ENCODE measurements at regions of chr12 and their contacts with region 1.

Region 1: DNA sequence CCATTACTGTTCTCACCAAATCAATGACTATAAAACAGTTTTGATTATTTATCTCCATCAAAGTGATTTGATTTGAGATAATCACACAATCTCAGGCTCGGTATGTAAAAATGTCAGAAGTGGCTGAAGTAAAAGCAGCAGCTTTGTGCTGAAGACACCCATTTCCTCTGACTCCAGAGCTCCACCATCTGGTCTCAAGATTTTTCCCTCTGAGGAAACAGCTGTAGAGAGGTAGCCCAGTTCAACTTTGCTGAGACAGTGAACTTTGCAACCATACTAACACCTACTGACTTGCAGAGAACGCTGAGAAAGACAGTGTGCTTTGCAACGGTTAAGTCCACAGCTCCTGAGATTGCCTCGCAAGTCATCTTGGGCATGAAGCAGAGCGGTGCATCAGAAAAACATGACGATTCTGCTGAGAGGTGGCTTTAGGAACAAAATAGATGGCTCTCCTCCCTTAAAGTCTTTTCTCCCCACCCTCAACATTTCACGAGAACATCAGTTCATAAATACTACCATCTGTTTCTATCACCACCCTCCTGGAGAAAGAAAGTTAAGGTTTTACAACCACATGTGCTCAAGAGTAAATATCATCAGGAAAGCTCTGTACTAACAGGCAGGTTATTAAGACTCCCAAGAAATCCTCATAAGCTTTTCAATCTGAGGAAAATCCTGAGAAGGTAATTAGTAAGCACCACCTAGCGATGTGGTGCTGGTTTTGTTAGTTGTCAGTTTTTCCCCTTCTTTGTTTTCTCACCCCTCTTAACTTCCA is 34.8 kb downstream of the HIGD1C start:
- DNase-seq: peak in 2 of 5 donors; percentile 42 to 50
- ATAC-seq: peak; percentile 65 to 79 (median 76)
- H3K4me3 ChIP-seq: no peak overlapping the region
- H3K27ac ChIP-seq: peak overlapping the region in 5 of 12 donors; percentile 24 to 87 (median 71)
- H3K4me1 ChIP-seq: peaks cover 0 to 32% (median 23%) of the 10 kb centered on the region in 12 donors
- H3K27me3 ChIP-seq: no peaks in the 10 kb centered on the region
- CTCF ChIP-seq: peak in 11 of 12 donors; percentile 26 to 79 (median 64)
- POLR2A ChIP-seq: no peak

Region 2: GRCh38 chr12:50763639-50764285 is 223.4 kb before region 1 on chr12 and contains the start of gene ATF1:
- intact Hi-C with region 1: loop called in 5 of 10 experiments (anchors 2 to 5 kb)
- DNase-seq: peak; percentile 89 to 95 (median 93)
- ATAC-seq: peak; percentile 93 to 96 (median 95)
- H3K4me3 ChIP-seq: peak within 1 kb of the TSS; percentile 72 to 100 (median 98)
- H3K27ac ChIP-seq: peak within 1 kb of the TSS; percentile 95 to 99 (median 98)
- H3K4me1 ChIP-seq: peaks cover 3 to 48% (median 17%) of the 10 kb centered on the region in 12 donors
- H3K27me3 ChIP-seq: no peaks in the 10 kb centered on the region
- CTCF ChIP-seq: no peak
- POLR2A ChIP-seq: peak in 1 of 2 donors; percentile 64
- total RNA-seq, gene ATF1: 9.7 to 27.4 (median 22.3) TPM

Region 3: GRCh38 chr12:50825372-50825838 is 161.7 kb before region 1 on chr12:
- intact Hi-C with region 1: loop called (anchors 1 to 2 kb)
- DNase-seq: no peak
- ATAC-seq: peak; percentile 54 to 83 (median 70)
- H3K4me3 ChIP-seq: no peak overlapping the region
- H3K27ac ChIP-seq: peak overlapping the region in 10 of 12 donors; percentile 18 to 70 (median 62)
- H3K4me1 ChIP-seq: peaks cover 0 to 11% (median 0%) of the 10 kb centered on the region in 12 donors
- H3K27me3 ChIP-seq: no peaks in the 10 kb centered on the region
- CTCF ChIP-seq: peak; percentile 30 to 66 (median 53)
- POLR2A ChIP-seq: no peak

Region 4: DNA sequence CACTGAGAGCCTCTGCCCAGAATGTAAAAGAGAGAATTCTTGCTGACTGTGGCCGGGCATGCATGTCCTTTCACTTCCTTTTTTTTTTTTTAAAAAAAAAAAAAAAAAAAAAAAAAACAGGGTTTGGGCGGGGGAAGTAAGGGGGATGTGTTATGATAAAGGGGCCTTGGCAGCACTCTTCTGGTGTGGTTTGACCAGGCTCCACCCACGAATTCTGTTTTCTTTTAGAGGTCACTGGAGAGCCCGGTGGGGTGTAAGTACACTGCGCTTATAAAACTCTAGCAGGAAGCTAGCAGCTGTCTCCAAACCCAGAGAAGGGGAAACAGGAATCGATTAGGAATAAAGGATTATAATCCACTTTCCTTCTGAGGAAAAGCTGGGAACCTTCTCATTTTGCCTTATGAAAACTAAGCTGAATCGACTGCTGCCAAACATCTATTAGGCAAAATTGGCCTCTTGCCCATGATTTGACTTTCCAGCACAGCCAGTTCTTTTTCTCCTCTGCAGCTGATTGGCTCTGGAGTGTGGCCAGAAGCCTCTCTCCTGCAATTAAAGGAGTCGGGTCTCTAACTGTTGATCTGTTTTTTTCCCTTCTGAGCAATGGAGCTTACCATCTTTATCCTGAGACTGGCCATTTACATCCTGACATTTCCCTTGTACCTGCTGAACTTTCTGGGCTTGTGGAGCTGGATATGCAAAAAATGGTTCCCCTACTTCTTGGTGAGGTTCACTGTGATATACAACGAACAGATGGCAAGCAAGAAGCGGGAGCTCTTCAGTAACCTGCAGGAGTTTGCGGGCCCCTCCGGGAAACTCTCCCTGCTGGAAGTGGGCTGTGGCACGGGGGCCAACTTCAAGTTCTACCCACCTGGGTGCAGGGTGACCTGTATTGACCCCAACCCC is 62.5 kb before region 1 on chr12:
- intact Hi-C with region 1: loop called in 5 of 10 experiments (anchors 5 to 10 kb)
- DNase-seq: peak; percentile 85 to 95 (median 93)
- ATAC-seq: peak; percentile 94 to 96 (median 96)
- H3K4me3 ChIP-seq: peak overlapping the region; percentile 63 to 88 (median 71)
- H3K27ac ChIP-seq: peak overlapping the region; percentile 83 to 95 (median 88)
- H3K4me1 ChIP-seq: peaks cover 0 to 59% (median 40%) of the 10 kb centered on the region in 12 donors
- H3K27me3 ChIP-seq: no peaks in the 10 kb centered on the region
- CTCF ChIP-seq: no peak
- POLR2A ChIP-seq: peak in 1 of 2 donors; percentile 50

Region 5: GRCh38 chr12:51341259-51342007 is 354.3 kb after region 1 on chr12:
- intact Hi-C with region 1: loop called in 2 of 10 experiments (anchors 5 kb)
- DNase-seq: peak in 4 of 5 donors; percentile 42 to 64 (median 46)
- ATAC-seq: peak; percentile 42 to 88 (median 88)
- H3K4me3 ChIP-seq: peak overlapping the region in 8 of 12 donors; percentile 8 to 51 (median 28)
- H3K27ac ChIP-seq: peak overlapping the region in 1 of 12 donors; percentile 1
- H3K4me1 ChIP-seq: peaks cover 0 to 6% (median 1%) of the 10 kb centered on the region in 12 donors
- H3K27me3 ChIP-seq: no peaks in the 10 kb centered on the region
- CTCF ChIP-seq: peak; percentile 89 to 99 (median 94)
- POLR2A ChIP-seq: no peak

Measured in heart left ventricle (tissue), 16 donors.